ENCODE measurements at regions of chr4 and their contacts with region 1.

Region 1: GRCh38 chr4:40486534-40486933 is 143.1 kb downstream of the RBM47 start:
- DNase-seq: peak; percentile 44
- H3K27ac ChIP-seq: no peak overlapping the region
- CTCF ChIP-seq: no peak

Region 2: DNA sequence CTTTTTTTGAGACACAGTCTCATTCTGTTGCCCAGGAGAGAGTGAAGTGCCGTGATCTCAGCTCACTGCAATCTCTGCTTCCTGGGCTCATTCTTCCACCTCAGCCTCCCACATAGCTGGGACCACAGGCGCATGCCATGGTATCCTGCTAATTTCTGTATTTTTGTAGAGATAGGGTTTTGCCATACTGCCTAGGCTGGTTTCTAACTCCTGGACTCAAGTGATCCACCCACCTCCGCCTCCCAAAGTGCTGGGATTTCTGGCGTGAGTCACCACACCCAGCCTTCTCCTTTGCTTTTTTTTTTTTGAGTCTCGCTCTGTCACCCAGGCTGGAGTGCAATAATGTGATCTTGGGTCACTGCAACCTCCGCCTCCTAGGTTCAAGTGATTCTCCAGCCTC is 602.9 kb before region 1 on chr4:
- CTCF ChIA-PET with region 1: interaction called, 11 read pairs
- POLR2A ChIA-PET with region 1: no interaction called
- DNase-seq: no peak
- H3K27ac ChIP-seq: no peak overlapping the region
- CTCF ChIP-seq: no peak

Region 3: DNA sequence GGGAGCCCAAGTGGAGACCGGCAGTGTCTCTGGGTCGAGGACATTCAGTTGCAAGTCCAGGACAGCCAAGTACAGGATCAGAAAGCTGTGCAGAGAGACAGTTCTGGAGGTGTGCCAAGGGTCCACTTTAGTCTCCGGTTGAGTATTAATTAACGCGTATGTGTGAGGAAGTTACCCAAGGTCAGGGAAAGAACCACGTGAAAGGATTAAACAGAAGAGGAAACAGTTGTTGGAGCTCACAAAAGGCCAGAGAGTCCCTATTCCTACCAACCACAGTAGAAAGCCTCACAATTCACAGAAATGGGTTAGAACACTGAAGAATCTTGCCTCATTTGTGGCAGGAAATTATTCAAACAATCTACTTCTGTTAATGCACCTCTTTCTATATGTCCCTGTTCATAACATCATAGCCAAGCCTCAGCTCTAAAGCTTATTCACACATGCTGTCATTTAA is 245.3 kb after region 1 on chr4:
- CTCF ChIA-PET with region 1: no interaction called
- POLR2A ChIA-PET with region 1: interaction called, 10 read pairs
- DNase-seq: no peak
- H3K27ac ChIP-seq: no peak overlapping the region
- CTCF ChIP-seq: no peak